ENCODE measurements at regions of chr15 and their contacts with region 1.

Region 1: DNA sequence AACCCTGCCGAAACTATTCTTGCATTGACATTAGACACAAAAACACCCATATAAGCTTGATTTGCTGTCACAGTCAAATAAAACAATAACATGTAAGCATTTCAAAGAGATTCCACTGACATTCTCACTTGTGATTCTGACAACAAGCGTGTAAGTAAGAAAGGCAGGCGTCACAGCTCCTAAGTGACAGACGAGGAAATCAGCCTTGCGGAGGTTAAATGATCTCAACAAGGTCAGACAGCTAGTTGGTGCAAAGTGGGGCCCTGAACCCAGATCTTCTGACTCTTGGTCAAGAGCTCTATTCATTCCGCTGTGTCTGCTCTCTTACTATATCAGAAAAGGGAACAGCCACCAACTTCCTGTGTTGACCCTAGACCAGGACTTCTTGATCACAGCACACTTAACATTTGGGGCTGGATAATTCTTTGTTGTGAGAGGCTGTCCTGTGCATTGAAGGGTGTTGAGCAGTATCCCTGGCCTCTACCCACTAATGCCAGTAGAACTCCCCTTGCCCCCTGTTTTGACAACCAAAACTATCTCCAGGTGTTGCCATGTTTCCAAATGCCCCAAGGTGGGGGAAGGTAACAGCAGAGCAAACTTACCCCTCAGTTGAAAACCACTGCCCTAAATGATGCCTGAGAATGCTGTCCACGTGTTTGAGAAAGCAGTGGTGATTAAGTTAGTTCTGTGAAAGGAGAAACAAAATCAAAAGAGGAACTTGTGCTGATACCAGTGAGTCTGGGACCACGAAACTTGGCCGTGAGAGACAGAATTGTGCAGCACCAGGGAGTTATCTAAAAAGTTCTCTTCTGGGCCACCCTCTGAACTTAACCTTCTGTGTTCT is 86.1 kb downstream of the LIPC start:
- DNase-seq: no peak
- H3K4me3 ChIP-seq: no peak overlapping the region
- H3K27ac ChIP-seq: no peak overlapping the region
- H3K4me1 ChIP-seq: peaks cover 0 to 8% (median 0%) of the 10 kb centered on the region in 4 donors
- H3K27me3 ChIP-seq: no peaks in the 10 kb centered on the region
- CTCF ChIP-seq: no peak
- EP300 ChIP-seq: no peak
- POLR2A ChIP-seq: no peak

Region 2: GRCh38 chr15:56813995-56814394 is 1703.9 kb before region 1 on chr15:
- in situ Hi-C with region 1: no loop called
- intact Hi-C with region 1: loop called (anchors 5 kb)
- DNase-seq: no peak
- H3K4me3 ChIP-seq: no peak overlapping the region
- H3K27ac ChIP-seq: peak overlapping the region in 1 of 4 donors; percentile 73
- H3K4me1 ChIP-seq: peaks cover 0 to 13% (median 0%) of the 10 kb centered on the region in 4 donors
- H3K27me3 ChIP-seq: no peaks in the 10 kb centered on the region
- CTCF ChIP-seq: no peak
- EP300 ChIP-seq: no peak
- POLR2A ChIP-seq: no peak

Region 3: DNA sequence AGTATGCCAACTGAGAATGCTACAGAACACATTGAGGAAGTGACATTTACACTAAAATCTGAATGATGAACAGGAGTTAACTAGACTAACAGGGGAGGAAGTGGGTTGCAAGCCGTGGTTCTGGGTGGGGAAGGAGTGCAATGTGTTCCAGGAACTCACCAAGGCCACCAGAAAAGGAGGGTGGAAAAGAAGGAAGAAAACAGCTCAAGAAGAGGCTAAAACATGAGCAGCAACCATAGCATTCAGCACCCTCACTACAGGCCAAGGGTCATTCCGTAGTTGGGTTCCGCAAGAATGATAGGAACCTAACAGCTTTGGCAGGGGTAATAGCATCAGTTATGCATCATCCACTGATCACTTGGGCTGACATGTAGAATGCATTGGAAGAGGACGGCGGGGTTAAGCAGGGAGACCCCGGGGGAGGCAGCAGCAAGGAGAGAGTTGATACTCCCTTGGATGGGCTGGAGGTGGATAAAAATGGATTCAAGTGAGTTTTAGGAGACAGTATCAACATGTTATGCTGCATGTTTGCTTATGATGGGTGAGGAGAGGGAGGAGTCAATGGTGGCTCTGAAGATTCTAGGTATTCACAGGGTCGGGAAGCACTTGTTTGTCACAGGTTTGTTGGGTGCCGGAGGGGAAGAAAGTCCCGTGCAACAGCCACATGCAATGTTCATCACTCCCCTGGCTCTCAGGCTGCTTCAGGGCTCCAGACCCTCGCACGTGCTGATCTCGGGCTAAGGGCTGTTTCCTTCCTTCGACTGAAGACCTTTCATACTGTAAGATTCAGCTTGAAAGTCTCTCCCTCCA is 32.9 kb before region 1 on chr15:
- in situ Hi-C with region 1: no loop called
- intact Hi-C with region 1: no loop called
- DNase-seq: peak; percentile 22
- H3K4me3 ChIP-seq: no peak overlapping the region
- H3K27ac ChIP-seq: no peak overlapping the region
- H3K4me1 ChIP-seq: peaks cover 0 to 3% (median 0%) of the 10 kb centered on the region in 4 donors
- H3K27me3 ChIP-seq: no peaks in the 10 kb centered on the region
- CTCF ChIP-seq: no peak
- EP300 ChIP-seq: no peak
- POLR2A ChIP-seq: no peak

Measured in transverse colon (tissue), 4 donors.